Right ventricle myocardium superior (tissue), 1 donor: ENCODE measurements at regions of chr1 and their contacts with region 1.

Region 1: DNA sequence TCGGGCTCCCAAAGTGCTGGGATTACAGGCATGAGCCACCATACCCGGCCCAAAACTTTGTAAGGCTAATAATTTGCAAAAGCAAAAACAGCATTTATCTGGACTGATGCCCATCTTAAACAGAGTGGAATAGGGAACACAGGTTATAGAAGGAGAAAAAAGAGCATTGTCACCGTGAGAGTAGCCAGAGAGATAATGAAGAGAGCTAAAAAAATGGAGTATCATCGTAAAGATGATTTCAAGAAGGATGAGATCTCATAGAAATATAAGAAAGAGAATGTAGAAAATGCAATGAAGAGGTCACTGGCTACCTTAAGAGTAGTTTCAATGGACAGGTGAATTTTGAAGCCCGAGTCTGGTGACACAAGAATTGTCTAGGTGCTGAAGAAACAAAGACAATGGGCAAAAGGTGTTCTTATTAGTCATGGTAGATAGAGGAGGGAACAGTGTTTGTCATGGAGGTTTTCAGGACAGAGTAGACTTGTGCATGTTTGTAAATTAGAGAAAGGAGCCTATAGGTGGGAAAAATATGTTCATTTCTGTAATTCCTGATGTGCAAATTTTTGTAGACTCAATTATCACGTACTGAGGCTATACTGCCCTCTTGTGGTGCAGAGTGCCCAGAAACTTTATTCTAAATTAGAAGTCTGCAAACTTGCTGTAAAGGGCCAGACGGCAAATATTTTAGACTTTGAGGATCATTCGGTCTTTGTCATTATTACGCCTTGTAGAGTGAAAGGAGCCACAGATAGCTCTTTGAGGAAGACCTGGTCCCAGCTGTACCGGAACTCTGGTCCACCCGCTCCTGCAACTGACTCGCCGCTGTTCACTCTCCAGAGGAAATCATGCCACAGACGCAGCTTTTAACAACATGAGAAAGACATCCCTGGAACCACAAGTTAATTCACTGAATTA is 8.1 kb upstream of the TMEM183A start:
- DNase-seq: no peak
- ATAC-seq: peak; percentile 56

Region 2: DNA sequence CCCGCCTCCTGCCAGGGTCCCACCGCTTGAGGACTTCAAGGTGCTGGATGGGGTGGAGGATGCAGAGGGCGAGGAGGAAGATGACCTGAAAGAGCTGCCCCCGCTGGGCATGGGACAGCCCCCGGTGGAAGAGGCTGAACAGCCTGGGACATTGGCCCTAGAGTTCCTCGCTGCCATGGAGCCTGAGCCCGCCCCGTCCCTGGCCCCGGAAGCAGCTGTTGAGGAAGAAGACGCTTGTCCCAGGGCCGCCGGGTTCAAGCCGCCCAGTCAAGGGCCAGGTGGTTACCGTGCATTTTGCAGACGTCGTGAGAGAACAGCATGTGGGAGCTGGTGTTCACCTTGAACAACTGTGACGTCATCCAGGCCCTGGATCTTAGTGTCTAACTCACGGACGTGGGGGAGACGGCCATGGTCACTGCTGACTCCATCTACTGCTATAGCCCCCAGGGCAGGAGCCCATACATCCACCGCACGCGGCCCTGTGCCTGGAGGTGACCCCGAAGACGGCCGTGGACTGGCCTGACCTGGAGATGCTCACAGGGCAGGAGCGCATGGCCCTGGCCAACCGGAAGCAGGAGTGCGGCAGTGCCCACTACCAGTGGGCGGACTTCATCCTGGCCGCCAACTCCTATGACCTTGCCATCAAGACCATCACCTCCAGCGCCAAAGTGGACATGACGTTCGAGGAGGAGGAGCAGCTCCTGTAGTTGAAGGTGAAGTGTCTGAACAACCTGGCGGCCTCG is 560.5 kb before region 1 on chr1:
- intact Hi-C with region 1: no loop called
- DNase-seq: peak; percentile 39
- ATAC-seq: peak; percentile 7

Region 3: GRCh38 chr1:202745323-202745888 is 253.7 kb before region 1 on chr1:
- intact Hi-C with region 1: loop called (anchors 10 kb)
- DNase-seq: no peak
- ATAC-seq: no peak

Region 4: DNA sequence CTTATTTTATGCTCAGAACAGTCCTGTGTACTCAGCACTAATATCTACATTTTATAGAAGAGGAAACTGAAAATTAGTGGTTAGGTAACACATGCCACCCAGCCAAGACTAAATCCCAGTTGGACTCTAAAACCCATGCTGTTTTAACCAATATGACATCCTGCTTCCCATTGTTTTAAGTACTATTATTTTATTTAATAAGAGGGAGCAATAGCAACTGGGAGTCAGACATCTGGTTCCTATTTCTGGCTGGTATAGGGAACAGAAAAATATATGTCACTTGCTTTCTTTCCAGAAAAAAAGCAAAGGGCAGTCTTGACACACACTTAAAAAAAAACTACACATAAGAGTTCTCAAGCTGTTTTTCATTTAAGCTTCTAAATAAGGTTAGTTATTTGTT is 83.9 kb before region 1 on chr1:
- intact Hi-C with region 1: loop called (anchors 10 kb)
- DNase-seq: no peak
- ATAC-seq: no peak